ENCODE measurements at regions of chr3 and their contacts with region 1.

Region 1: GRCh38 chr3:177640319-177640997 is 443.2 kb upstream of the TBL1XR1 start:
- DNase-seq: no peak
- H3K4me3 ChIP-seq: no peak overlapping the region
- H3K4me3 Mint-ChIP-seq: peak overlapping the region in 5 of 7 donors; percentile 12 to 52 (median 29)
- H3K27ac ChIP-seq: no peak overlapping the region
- H3K27ac Mint-ChIP-seq: peak overlapping the region; percentile 55 to 98 (median 85)
- H3K4me1 ChIP-seq: peaks cover 48% of the 10 kb centered on the region
- H3K4me1 Mint-ChIP-seq: peaks cover 57 to 60% (median 60%) of the 10 kb centered on the region in 3 donors
- H3K27me3 ChIP-seq: no peaks in the 10 kb centered on the region
- H3K27me3 Mint-ChIP-seq: peaks cover 0 to 2% of the 10 kb centered on the region in 2 donors

Region 2: DNA sequence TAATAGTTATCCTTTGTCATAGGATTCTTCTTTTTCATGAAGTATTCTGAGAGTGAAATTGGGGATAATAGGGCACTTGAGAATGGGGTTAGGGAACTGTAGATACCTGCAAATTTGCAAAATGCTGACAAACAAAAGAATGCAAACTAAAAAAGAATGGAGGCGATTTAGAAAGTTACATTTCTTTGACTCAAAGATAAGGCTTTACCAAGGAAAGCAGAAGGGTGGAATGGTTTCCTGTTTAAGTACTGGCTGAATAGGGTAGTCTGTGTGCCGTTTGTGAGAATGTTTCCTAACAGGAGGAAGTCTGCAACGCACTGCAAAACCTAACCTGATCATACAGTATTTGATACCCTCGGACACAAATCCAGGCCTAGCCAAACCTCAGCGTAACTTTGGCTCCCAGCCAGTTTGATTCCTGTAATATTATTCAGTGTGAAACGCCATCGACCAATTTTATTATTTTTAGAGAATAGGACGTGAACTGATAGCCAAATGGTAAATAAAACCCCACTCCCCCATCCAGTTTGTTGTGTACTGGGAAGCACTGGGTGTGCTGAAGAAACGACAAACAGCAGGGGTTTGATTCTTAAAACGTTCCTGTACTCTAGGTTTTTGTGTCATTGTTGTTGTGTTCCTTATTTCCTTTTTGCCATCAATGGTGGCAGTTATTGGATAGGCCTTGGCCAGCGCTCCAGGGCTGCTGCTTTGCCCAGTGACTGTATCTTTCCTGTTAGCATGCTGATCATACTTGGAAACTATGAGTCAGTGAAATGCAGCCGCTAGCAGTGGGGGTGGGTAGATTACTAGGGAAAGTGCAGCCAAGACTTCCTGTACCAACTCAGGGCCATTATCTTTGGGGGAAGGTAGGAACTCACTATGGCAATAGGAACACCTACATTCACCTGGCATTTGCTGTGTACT is 295.1 kb before region 1 on chr3:
- CTCF ChIA-PET with region 1: no interaction called
- POLR2A ChIA-PET with region 1: no interaction called
- DNase-seq: peak in 3 of 5 donors; percentile 13 to 72 (median 21)
- H3K4me3 ChIP-seq: no peak overlapping the region
- H3K4me3 Mint-ChIP-seq: peak overlapping the region in 2 of 7 donors; percentile 23 to 44
- H3K27ac ChIP-seq: peak overlapping the region; percentile 53
- H3K27ac Mint-ChIP-seq: peak overlapping the region in 3 of 8 donors; percentile 61 to 68 (median 63)
- H3K4me1 ChIP-seq: peaks cover 12% of the 10 kb centered on the region
- H3K4me1 Mint-ChIP-seq: peaks cover 12 to 20% (median 16%) of the 10 kb centered on the region in 3 donors
- H3K27me3 ChIP-seq: no peaks in the 10 kb centered on the region
- H3K27me3 Mint-ChIP-seq: no peaks in the 10 kb centered on the region

Region 3: GRCh38 chr3:177705976-177706823 is 65.7 kb after region 1 on chr3:
- CTCF ChIA-PET with region 1: no interaction called
- POLR2A ChIA-PET with region 1: interaction called, 10 read pairs
- DNase-seq: no peak
- H3K4me3 ChIP-seq: no peak overlapping the region
- H3K4me3 Mint-ChIP-seq: no peak overlapping the region
- H3K27ac ChIP-seq: no peak overlapping the region
- H3K27ac Mint-ChIP-seq: no peak overlapping the region
- H3K4me1 ChIP-seq: no peaks in the 10 kb centered on the region
- H3K4me1 Mint-ChIP-seq: no peaks in the 10 kb centered on the region
- H3K27me3 ChIP-seq: no peaks in the 10 kb centered on the region
- H3K27me3 Mint-ChIP-seq: peaks cover 0 to 2% of the 10 kb centered on the region in 2 donors

Measured in CD8-positive, alpha-beta memory T cell (primary cell).